ENCODE measurements at regions of chr12 and their contacts with region 1.

Region 1: GRCh38 chr12:74791365-74791764 is 253.7 kb downstream of the ATXN7L3B start:
- DNase-seq: no peak
- H3K4me3 ChIP-seq: no peak overlapping the region
- H3K4me3 Mint-ChIP-seq: no peak overlapping the region
- H3K27ac ChIP-seq: no peak overlapping the region
- H3K27ac Mint-ChIP-seq: no peak overlapping the region
- H3K4me1 ChIP-seq: no peaks in the 10 kb centered on the region
- H3K4me1 Mint-ChIP-seq: no peaks in the 10 kb centered on the region
- H3K27me3 ChIP-seq: no peaks in the 10 kb centered on the region
- H3K27me3 Mint-ChIP-seq: no peaks in the 10 kb centered on the region
- CTCF ChIP-seq: no peak

Region 2: DNA sequence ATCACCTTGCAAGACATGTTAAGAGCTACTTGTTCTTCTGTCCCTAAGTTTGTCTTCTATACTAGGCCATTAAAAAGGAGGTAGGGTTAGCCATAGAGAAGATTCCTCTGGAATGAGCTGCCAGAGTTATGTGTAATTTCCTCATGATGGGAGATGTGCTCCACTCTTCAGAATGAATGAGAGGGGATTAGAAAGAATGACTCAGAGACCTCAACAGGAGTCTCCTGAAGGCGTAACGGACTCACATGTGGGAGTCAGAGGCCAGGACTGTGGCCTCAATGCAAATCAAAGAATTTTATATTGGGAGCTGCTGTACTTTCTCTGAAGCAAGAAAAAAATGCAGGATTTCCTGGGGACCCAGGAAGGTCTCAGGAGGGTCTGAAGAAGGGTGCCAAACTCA is 341.5 kb before region 1 on chr12:
- intact Hi-C with region 1: no loop called
- DNase-seq: no peak
- H3K4me3 ChIP-seq: no peak overlapping the region
- H3K4me3 Mint-ChIP-seq: no peak overlapping the region
- H3K27ac ChIP-seq: no peak overlapping the region
- H3K27ac Mint-ChIP-seq: no peak overlapping the region
- H3K4me1 ChIP-seq: no peaks in the 10 kb centered on the region
- H3K4me1 Mint-ChIP-seq: no peaks in the 10 kb centered on the region
- H3K27me3 ChIP-seq: no peaks in the 10 kb centered on the region
- H3K27me3 Mint-ChIP-seq: no peaks in the 10 kb centered on the region
- CTCF ChIP-seq: no peak

Region 3: DNA sequence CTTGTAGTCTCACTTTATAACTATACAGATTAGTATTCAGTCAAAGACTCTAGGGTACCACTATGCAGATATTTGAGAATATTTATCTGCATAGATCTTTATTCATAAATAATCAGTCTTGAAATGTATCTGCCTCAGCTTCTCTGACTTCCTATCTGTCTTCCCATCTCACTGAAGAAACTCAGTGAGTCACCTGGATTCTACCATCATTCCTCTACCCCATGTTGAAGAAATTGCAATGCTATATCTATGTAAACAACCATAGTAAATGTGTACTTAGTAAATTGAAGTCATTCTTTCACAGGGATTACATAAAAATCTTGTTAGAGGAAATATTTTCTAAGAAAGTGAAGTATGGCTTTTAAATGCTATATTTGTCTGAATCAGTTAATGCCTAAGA is 34.8 kb after region 1 on chr12:
- intact Hi-C with region 1: loop called in 1 of 2 experiments (anchors 2 kb)
- DNase-seq: no peak
- H3K4me3 ChIP-seq: no peak overlapping the region
- H3K4me3 Mint-ChIP-seq: no peak overlapping the region
- H3K27ac ChIP-seq: no peak overlapping the region
- H3K27ac Mint-ChIP-seq: no peak overlapping the region
- H3K4me1 ChIP-seq: no peaks in the 10 kb centered on the region
- H3K4me1 Mint-ChIP-seq: no peaks in the 10 kb centered on the region
- H3K27me3 ChIP-seq: no peaks in the 10 kb centered on the region
- H3K27me3 Mint-ChIP-seq: peaks cover 0 to 2% (median 0%) of the 10 kb centered on the region in 3 donors
- CTCF ChIP-seq: no peak